A549 (cell line): ENCODE measurements at regions of chr7 and their contacts with region 1.

Region 1: DNA sequence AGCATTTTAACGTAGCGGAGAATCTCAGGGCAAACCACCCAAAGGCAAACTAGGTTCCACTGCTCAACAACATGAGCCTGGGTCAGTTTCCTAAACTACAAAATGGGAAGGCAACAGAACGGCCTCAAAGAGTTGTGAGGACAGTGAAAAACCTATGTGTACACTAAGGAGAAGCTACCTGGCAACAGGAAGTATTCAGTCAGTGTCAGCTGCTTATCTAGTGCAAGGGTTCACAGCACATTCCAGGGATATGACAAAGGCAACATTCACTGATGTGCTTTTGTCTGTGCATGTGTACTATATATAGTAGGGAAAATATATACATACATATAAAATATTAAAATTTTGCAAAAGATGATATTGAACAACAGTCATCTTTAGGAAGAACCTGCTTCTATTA is 17.2 kb downstream of the NUDCD3 start:
- DNase-seq: peak in 1 of 2 experiments; percentile 21
- ATAC-seq: peak in 1 of 2 experiments; percentile 36; a peak in 1 of 6 replicates
- H3K4me3 ChIP-seq: no peak overlapping the region
- H3K27ac ChIP-seq: no peak overlapping the region
- H3K4me1 ChIP-seq: 0 out of 3 replicates have a peak, but pooled peaks cover 3% of the 10 kb centered on the region
- CTCF ChIP-seq: no peak
- EP300 ChIP-seq: no peak
- POLR2A ChIP-seq: no peak
- RAD21 ChIP-seq: no peak

Region 2: DNA sequence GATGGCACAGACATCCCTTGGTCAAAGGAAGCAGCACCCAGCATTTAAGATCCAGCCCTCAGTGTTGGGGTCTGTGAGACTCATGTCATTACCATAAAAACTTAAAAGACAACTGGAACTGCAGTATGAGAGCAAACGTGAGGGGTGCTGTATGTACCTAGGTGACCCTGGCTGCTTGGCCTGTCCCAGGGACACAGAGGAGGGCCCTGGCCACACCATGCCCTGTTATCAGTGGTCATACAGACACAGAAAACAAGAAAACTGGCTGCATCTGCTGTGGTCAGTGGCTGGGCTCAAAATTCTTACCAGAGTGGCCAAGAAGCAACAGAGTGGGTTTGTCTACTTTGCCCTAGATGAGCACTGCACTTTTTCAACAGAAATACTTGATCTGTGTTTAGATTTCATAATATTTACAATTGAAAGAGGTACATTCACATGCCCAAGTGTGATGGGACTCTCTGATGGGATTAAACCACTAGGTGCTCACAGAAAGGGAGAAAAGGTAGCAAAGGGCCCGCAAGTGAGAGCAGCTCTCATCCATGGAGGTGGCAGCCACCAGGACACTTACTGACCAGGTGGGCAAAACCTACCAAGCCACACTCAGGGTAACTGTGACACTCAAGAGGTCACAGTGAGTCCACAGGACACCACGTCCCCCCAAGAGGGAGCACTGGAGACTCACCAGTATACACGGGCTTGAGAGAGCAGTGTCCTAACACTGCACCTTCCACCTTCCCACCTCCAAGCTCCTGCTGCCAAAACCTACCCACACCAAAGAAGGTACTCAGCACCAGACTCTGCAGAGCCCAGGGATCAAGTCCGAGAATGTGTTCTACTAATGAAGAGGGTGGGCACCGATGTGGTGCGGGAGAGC is 79.8 kb before region 1 on chr7:
- CTCF ChIA-PET with region 1: no interaction called
- POLR2A ChIA-PET with region 1: no interaction called
- DNase-seq: no peak
- ATAC-seq: no peak
- H3K4me3 ChIP-seq: no peak overlapping the region
- H3K27ac ChIP-seq: no peak overlapping the region
- H3K4me1 ChIP-seq: no peaks in the 10 kb centered on the region
- CTCF ChIP-seq: no peak
- EP300 ChIP-seq: no peak
- POLR2A ChIP-seq: no peak
- RAD21 ChIP-seq: no peak

Region 3: DNA sequence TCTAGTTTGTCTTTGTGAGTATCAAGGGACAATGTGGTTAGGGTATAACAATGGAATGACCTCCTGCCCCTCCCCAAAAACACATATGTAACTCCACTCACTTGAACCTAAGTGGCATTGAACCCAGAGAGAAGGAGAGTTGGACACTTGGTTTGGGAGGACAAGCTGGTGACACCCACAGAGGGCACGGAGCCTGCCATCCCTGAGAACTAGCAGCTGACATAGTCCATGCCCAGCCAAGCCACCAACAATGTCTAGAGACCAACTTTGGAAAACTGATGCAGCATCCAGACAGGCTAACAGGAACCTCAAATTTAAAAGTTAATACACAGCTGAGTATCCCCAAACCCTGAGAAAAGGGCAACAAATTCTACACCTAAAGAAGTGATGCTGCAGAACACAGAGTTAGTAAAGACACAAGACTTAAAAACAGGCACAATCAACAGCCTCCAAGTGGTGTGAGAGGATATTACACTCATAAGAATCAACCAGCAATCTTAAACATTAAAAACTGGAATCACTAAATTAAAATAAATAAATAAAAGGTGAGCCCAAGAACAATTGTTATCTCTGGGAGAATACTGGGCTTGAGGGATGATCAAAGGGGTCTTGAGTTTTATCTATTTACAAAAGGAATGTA is 10.0 kb before region 1 on chr7:
- CTCF ChIA-PET with region 1: interaction called, 10 read pairs
- POLR2A ChIA-PET with region 1: no interaction called
- DNase-seq: peak; percentile 14 to 16
- ATAC-seq: peak in 1 of 2 experiments; percentile 66; a peak in 2 of 6 replicates
- H3K4me3 ChIP-seq: no peak overlapping the region
- H3K27ac ChIP-seq: no peak overlapping the region
- H3K4me1 ChIP-seq: no peaks in the 10 kb centered on the region
- CTCF ChIP-seq: 0 out of 3 replicates have a peak, but pooled peaks have one; percentile 5
- EP300 ChIP-seq: no peak
- POLR2A ChIP-seq: no peak
- RAD21 ChIP-seq: no peak